ENCODE measurements at regions of chr1 and their contacts with region 1.

Region 1: DNA sequence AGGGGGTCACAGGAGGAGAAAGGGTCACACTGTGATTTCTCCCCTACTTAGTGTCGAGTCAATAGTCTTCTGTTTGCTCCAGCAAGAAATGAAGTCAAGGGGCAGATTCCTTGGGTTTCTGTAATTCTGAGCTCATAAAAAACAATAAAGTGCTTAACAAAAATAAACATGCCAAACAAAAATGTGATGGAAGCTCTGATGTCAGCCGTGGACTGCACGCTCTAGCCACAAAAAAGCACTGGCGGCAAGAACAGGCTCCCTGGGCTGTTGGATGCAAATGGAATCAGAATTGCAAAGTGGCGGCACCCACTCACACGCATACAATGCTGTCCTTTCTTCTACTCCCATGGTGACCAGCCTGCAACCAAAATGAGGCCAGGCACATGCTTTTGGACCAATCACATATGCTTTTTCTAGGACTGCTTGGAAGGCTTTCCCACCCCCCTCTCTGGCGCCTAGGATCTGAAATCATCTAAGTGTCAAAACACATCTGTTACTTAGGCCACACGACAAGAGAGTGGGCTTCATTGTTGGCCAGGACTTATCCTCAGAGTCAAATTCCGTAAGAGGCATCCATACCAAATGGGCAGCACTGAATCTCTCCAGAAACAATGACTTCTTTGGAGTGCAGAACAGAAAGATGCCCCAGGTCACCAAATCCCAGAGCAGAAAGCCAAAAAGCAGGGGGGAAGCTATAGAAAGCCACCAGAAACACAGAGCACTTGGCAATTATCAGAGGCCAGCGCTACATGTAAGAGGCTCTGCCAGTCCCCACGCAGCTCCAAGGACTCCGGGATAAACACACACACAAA is 9.2 kb downstream of the C1orf198 start:
- DNase-seq: no peak
- H3K4me3 ChIP-seq: no peak overlapping the region
- H3K27ac ChIP-seq: peak overlapping the region; percentile 3 to 73 (median 50)
- H3K4me1 ChIP-seq: peaks cover 0 to 87% (median 77%) of the 10 kb centered on the region in 4 donors
- H3K27me3 ChIP-seq: no peaks in the 10 kb centered on the region
- CTCF ChIP-seq: no peak
- EP300 ChIP-seq: peak in 1 of 4 donors; percentile 14
- POLR2A ChIP-seq: no peak

Region 2: DNA sequence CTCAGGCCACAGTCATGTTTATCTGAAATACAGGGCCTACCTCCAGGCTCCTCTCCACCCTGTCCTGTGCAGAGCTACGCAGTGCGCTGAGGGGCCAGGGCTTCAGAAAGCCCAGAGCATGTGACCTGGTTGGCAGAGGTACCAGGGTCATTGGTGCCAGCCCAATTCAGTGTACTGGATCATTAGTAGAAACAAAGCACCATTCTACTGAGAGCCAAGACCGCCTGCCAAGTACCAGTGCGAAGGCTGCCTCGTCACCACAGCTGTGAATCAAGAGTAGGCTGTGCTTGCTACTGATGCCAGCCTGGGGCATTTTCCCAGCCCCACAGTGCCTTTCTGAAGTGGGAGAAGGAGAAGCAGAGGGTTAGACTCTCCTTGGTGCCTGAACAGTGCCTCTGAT is 52.1 kb before region 1 on chr1:
- intact Hi-C with region 1: loop called (anchors 5 kb)
- DNase-seq: peak; percentile 84
- H3K4me3 ChIP-seq: no peak overlapping the region
- H3K27ac ChIP-seq: peak overlapping the region in 3 of 4 donors; percentile 45 to 66 (median 58)
- H3K4me1 ChIP-seq: peaks cover 0 to 5% (median 0%) of the 10 kb centered on the region in 4 donors
- H3K27me3 ChIP-seq: no peaks in the 10 kb centered on the region
- CTCF ChIP-seq: no peak
- EP300 ChIP-seq: no peak
- POLR2A ChIP-seq: no peak

Region 3: GRCh38 chr1:230899841-230900251 is 40.7 kb after region 1 on chr1:
- intact Hi-C with region 1: no loop called
- DNase-seq: no peak
- H3K4me3 ChIP-seq: no peak overlapping the region
- H3K27ac ChIP-seq: no peak overlapping the region
- H3K4me1 ChIP-seq: no peaks in the 10 kb centered on the region
- H3K27me3 ChIP-seq: no peaks in the 10 kb centered on the region
- CTCF ChIP-seq: no peak
- EP300 ChIP-seq: no peak
- POLR2A ChIP-seq: no peak

Region 4: GRCh38 chr1:231040019-231040799 is 181.1 kb after region 1 on chr1 and contains the start of gene FAM89A:
- intact Hi-C with region 1: no loop called
- DNase-seq: peak; percentile 71
- H3K4me3 ChIP-seq: peak within 1 kb of the TSS; percentile 39 to 72 (median 58)
- H3K27ac ChIP-seq: peak within 1 kb of the TSS in 3 of 4 donors; percentile 12 to 46 (median 22)
- H3K4me1 ChIP-seq: peaks cover 0 to 26% (median 25%) of the 10 kb centered on the region in 4 donors
- H3K27me3 ChIP-seq: peaks cover 12 to 59% (median 27%) of the 10 kb centered on the region in 3 donors
- CTCF ChIP-seq: no peak
- EP300 ChIP-seq: no peak
- POLR2A ChIP-seq: no peak
- total RNA-seq, gene FAM89A: 2.5 to 9.9 (median 8.1) TPM

Measured in sigmoid colon (tissue), 7 donors.